ENCODE measurements at regions of chr6 and their contacts with region 1.

Region 1: DNA sequence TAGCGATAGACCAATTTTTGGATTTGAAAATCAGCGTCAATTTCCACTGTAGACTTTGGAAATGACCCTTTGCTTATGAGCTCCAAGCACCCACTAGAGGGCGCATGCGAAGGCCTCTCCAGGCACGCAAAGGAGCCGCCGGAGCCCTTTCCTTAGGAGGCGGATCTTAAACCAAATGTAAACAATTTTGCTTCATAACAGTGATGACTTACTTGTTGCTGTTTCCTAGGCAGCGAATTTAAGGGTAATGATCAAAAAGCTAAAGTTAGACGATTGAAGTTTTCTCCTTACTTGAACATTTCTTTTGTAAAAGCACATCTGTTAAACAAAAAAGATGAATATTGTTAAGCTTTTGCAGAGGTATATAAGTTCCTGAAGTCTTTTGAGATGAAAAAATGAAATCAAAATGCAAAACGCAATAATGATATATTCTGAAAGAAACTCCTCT is 29.2 kb upstream of the EXOC2 start:
- DNase-seq: peak; percentile 65 to 67
- ATAC-seq: peak in 5 of 8 donors; percentile 49 to 75 (median 72)
- H3K4me3 ChIP-seq: no peak overlapping the region
- H3K27ac ChIP-seq: no peak overlapping the region
- H3K4me1 ChIP-seq: peaks cover 0 to 5% (median 0%) of the 10 kb centered on the region in 9 donors
- H3K27me3 ChIP-seq: peaks cover 0 to 6% (median 0%) of the 10 kb centered on the region in 7 donors
- CTCF ChIP-seq: peak; percentile 76 to 95 (median 91)

Region 2: DNA sequence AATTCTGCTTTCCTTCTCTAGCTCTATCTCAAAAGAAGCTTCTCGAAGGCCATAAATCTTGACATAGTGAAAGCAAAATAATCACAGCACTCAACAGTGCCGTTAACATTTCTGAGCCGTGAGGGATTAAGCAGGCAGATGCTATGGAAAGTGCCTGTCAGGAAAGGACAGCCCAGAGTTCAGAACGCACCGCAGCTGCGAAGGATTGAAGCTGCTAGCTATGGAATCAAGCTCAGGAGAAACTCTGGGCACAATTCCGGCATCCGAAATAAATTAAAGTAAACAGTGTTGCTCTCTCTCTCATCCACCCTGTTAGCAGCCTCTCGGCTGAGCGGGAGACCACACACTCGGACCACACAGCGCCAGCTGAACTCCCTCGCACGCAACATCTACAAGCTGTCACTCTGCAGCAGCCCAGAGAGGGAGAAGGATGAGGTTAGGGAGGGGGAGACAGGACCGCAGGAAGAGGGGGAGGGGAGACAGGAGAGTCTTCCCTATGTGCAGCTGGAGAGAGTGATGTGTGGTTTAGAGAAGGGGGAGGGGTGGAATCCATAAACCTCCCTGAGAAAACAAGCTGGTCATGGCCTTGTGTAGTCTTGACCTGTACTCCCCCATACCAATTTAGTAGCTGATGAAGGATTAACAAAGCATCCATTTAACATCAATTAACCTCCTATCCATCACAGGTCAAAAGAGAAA is 38.2 kb before region 1 on chr6:
- intact Hi-C with region 1: no loop called
- DNase-seq: no peak
- ATAC-seq: peak in 7 of 8 donors; percentile 34 to 75 (median 53)
- H3K4me3 ChIP-seq: peak overlapping the region in 7 of 10 donors; percentile 9 to 40 (median 20)
- H3K27ac ChIP-seq: peak overlapping the region in 2 of 10 donors; percentile 16 to 33
- H3K4me1 ChIP-seq: peaks cover 0 to 36% (median 13%) of the 10 kb centered on the region in 9 donors
- H3K27me3 ChIP-seq: no peaks in the 10 kb centered on the region
- CTCF ChIP-seq: no peak

Region 3: DNA sequence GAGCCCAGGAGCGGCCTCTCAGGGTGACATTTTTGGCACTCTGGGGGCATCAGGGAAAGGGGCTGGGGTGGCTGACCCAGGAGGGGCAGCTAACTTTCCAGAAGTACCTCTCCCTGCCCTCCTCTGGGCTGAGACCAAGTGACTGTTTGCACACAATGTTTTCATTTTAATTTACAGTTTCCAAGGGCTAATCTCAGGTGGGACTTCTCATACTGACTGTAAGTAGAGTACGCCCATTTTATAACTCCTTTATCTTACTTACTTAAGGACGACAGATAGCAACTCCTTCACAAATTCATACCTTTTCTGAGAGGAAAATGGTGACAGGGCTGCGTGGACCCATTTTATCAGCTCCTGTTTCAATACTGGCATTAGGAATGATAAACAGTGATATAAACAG is 143.7 kb after region 1 on chr6:
- intact Hi-C with region 1: no loop called
- DNase-seq: no peak
- ATAC-seq: no peak
- H3K4me3 ChIP-seq: no peak overlapping the region
- H3K27ac ChIP-seq: no peak overlapping the region
- H3K4me1 ChIP-seq: peaks cover 0 to 5% (median 0%) of the 10 kb centered on the region in 9 donors
- H3K27me3 ChIP-seq: peaks cover 0 to 40% (median 16%) of the 10 kb centered on the region in 7 donors
- CTCF ChIP-seq: no peak

Region 4: DNA sequence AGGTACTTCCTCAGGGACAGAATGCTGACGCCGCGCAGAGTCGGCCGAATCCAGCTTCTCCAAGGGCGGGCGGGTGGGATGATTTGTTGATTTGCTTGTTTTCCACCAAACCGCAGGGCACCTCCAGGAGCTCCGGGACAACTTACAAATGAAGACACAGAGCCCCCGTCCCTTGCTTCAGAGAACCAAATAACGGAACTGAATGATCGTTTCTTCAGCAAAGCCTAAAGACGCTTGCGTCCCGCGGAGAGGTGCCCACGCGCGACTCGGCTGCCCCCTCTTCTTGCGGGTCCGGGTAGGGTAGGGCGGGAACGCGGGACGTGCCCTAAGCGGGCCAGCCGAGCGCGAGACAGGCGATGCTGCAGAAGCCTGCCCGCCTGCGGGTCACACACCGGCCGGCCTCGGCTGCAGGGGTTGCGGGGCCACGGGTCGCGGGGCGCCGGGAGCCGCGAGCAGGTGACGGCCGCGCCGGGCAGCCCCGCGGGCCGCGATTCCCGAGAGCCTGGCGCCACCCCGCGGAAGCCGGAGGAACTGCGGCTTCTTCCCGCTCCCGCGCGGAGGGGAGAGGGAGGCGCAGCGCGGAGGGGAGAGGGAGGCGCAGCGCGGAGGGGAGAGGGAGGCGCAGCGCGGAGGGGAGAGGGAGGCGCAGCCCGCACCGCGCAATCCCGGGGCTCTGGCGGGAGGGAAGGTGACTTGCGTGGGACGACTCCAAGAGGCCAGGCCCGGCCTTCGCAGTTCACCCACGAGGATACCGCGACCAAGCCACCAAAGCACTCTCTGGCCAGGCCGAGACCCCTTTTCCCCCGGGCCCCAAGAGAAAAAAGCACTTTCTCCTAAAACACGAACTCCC is 659.6 kb after region 1 on chr6:
- intact Hi-C with region 1: loop called in 1 of 10 experiments (anchors 10 kb)
- DNase-seq: peak; percentile 29 to 55
- ATAC-seq: peak; percentile 77 to 88 (median 85)
- H3K4me3 ChIP-seq: peak overlapping the region in 9 of 10 donors; percentile 16 to 39 (median 31)
- H3K27ac ChIP-seq: no peak overlapping the region
- H3K4me1 ChIP-seq: peaks cover 8 to 59% (median 40%) of the 10 kb centered on the region in 9 donors
- H3K27me3 ChIP-seq: peaks cover 67 to 100% (median 100%) of the 10 kb centered on the region in 7 donors
- CTCF ChIP-seq: peak; percentile 68 to 93 (median 83)

Region 5: GRCh38 chr6:1396952-1397868 is 675.1 kb after region 1 on chr6:
- intact Hi-C with region 1: loop called in 1 of 10 experiments (anchors 10 kb)
- DNase-seq: peak; percentile 45 to 65
- ATAC-seq: peak in 5 of 8 donors; percentile 52 to 73 (median 69)
- H3K4me3 ChIP-seq: no peak overlapping the region
- H3K27ac ChIP-seq: no peak overlapping the region
- H3K4me1 ChIP-seq: peaks cover 0 to 17% (median 0%) of the 10 kb centered on the region in 9 donors
- H3K27me3 ChIP-seq: peaks cover 26 to 99% (median 93%) of the 10 kb centered on the region in 7 donors
- CTCF ChIP-seq: peak; percentile 82 to 98 (median 95)

Region 6: GRCh38 chr6:1436334-1437306 is 714.5 kb after region 1 on chr6:
- intact Hi-C with region 1: loop called in 1 of 10 experiments (anchors 5 kb)
- DNase-seq: peak in 1 of 2 donors; percentile 42
- ATAC-seq: peak in 7 of 8 donors; percentile 61 to 77 (median 69)
- H3K4me3 ChIP-seq: no peak overlapping the region
- H3K27ac ChIP-seq: no peak overlapping the region
- H3K4me1 ChIP-seq: no peaks in the 10 kb centered on the region
- H3K27me3 ChIP-seq: peaks cover 0 to 60% (median 49%) of the 10 kb centered on the region in 7 donors
- CTCF ChIP-seq: peak; percentile 43 to 82 (median 76)

Region 7: GRCh38 chr6:1713016-1713600 is 991.0 kb after region 1 on chr6:
- intact Hi-C with region 1: loop called in 1 of 10 experiments (anchors 10 kb)
- DNase-seq: no peak
- ATAC-seq: no peak
- H3K4me3 ChIP-seq: no peak overlapping the region
- H3K27ac ChIP-seq: no peak overlapping the region
- H3K4me1 ChIP-seq: peaks cover 0 to 9% (median 0%) of the 10 kb centered on the region in 9 donors
- H3K27me3 ChIP-seq: no peaks in the 10 kb centered on the region
- CTCF ChIP-seq: no peak